ENCODE measurements at regions of chr12 and their contacts with region 1.

Region 1: GRCh38 chr12:737122-737739 is 15.1 kb upstream of the WNK1 start:
- DNase-seq: no peak
- ATAC-seq: no peak
- H3K4me3 Mint-ChIP-seq: no peak overlapping the region
- H3K27ac Mint-ChIP-seq: no peak overlapping the region
- H3K4me1 Mint-ChIP-seq: peaks cover 0 to 8% (median 3%) of the 10 kb centered on the region in 4 donors
- H3K27me3 Mint-ChIP-seq: no peaks in the 10 kb centered on the region

Region 2: GRCh38 chr12:666766-667308 is 70.4 kb before region 1 on chr12:
- POLR2A ChIA-PET with region 1: no interaction called
- DNase-seq: no peak
- ATAC-seq: peak; percentile 23 to 33
- H3K4me3 Mint-ChIP-seq: peak overlapping the region in 3 of 10 donors; percentile 5 to 28 (median 23)
- H3K27ac Mint-ChIP-seq: peak overlapping the region in 3 of 10 donors; percentile 33 to 58 (median 56)
- H3K4me1 Mint-ChIP-seq: peaks cover 27 to 73% (median 42%) of the 10 kb centered on the region in 4 donors
- H3K27me3 Mint-ChIP-seq: no peaks in the 10 kb centered on the region

Region 3: DNA sequence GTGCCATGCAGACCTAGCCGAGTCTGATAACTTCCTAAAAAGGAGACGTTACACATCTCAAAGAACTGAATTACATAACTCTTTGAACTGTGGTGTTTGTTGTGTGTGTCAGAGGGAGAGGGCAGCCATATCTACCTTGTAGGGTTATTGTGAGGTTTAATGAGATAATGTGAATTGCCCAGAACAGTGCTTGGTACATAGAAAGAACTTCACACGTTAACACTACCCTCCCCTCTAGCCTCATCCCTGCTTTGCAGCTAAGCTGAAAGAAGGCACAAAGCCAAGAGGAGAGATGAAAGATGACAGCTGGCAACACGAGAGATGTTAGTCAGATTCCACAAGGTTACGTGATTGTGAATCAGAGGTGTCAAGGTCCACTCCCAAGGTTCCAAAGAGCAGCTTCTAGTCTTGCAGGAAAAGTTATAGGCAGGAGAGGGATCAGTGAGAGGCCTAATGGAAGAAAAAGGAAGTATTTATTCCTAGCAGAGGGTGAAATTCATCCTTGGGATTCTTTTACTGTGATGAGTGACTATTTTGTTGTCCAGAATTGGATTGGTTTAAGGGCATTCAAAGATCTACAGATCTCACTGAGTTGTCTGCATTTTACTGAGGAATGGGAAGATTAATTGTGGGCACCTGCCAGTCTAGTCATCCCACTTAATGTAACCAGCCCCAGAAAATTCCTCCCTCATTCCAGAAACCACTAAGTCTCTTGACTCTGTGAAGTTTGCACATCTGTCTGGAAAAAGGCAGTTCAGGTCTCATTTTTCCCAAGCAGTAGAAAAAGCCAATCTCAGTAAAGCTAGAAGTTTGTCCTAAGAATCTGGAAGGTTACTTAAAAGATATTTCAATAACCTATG is 10.7 kb before region 1 on chr12:
- POLR2A ChIA-PET with region 1: interaction called, 14 read pairs
- DNase-seq: peak in 2 of 10 donors; percentile 43 to 44
- ATAC-seq: peak; percentile 43 to 71
- H3K4me3 Mint-ChIP-seq: peak overlapping the region in 6 of 10 donors; percentile 0 to 71 (median 53)
- H3K27ac Mint-ChIP-seq: peak overlapping the region; percentile 78 to 92 (median 90)
- H3K4me1 Mint-ChIP-seq: peaks cover 38 to 82% (median 78%) of the 10 kb centered on the region in 4 donors
- H3K27me3 Mint-ChIP-seq: no peaks in the 10 kb centered on the region

Region 4: GRCh38 chr12:810671-811415 is 73.6 kb after region 1 on chr12:
- POLR2A ChIA-PET with region 1: no interaction called
- DNase-seq: no peak
- ATAC-seq: no peak
- H3K4me3 Mint-ChIP-seq: no peak overlapping the region
- H3K27ac Mint-ChIP-seq: peak overlapping the region in 9 of 10 donors; percentile 35 to 82 (median 75)
- H3K4me1 Mint-ChIP-seq: peaks cover 32 to 71% (median 58%) of the 10 kb centered on the region in 4 donors
- H3K27me3 Mint-ChIP-seq: no peaks in the 10 kb centered on the region

Region 5: GRCh38 chr12:1212526-1212925 is 475.3 kb after region 1 on chr12:
- POLR2A ChIA-PET with region 1: no interaction called
- DNase-seq: no peak
- ATAC-seq: no peak
- H3K4me3 Mint-ChIP-seq: no peak overlapping the region
- H3K27ac Mint-ChIP-seq: no peak overlapping the region
- H3K4me1 Mint-ChIP-seq: peaks cover 0 to under 1% (median 0%) of the 10 kb centered on the region in 4 donors
- H3K27me3 Mint-ChIP-seq: no peaks in the 10 kb centered on the region